ENCODE measurements at regions of chr17 and their contacts with region 1.

Region 1: DNA sequence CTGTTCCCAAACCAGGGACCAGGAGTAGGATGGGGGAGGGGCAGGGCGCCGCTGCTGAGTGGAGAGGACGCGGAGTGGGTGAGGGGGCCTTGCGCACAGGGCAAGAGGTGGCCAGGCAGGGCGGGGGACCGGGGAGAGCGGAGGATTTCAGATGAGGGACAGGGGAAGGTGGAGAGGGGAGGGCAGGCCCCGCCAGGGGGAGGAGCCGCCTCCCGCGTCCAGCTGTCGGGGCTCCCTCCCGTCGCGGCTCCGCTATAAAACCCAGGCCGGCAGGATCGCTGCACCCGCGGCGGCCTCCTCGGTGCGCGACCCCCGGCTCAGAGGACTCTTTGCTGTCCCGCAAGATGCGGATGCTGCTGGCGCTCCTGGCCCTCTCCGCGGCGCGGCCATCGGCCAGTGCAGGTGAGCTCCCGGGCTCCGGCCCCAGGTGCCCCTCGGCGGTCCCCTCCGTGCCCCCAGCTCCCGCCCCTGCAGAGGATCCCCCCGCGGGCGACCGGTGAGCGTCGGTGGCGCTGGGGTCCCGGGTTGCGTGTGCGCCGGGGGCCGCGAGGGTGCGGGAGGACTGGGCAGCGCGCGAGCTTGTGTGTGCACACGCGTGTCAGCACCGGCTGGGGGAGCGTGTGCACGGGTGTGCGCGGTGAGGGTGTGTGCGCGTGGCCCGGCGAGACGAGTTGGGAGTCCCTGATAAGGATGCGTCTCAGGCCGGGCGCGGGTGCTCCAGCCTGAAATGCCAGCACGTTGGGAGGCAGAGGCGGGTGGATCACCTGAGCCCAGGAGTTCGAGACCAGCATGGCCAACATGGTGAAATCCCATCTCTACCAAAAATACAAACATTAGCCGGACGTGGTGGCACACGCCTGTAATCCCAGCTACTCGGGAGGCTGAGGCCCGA is at the start of gene CA4:
- DNase-seq: no peak
- ATAC-seq: no peak
- H3K4me3 Mint-ChIP-seq: peak within 1 kb of the TSS; percentile 65
- H3K27ac Mint-ChIP-seq: no peak within 1 kb of the TSS
- H3K4me1 Mint-ChIP-seq: peaks cover 11% of the 10 kb centered on the region
- H3K27me3 Mint-ChIP-seq: peaks cover 70% of the 10 kb centered on the region
- total RNA-seq, gene CA4: not detected

Region 2: GRCh38 chr17:60372790-60373483 is 223.0 kb after region 1 on chr17:
- POLR2A ChIA-PET with region 1: interaction called, 10 read pairs
- DNase-seq: no peak
- ATAC-seq: no peak
- H3K4me3 Mint-ChIP-seq: no peak overlapping the region
- H3K27ac Mint-ChIP-seq: no peak overlapping the region
- H3K4me1 Mint-ChIP-seq: peaks cover 9% of the 10 kb centered on the region
- H3K27me3 Mint-ChIP-seq: no peaks in the 10 kb centered on the region

Measured in activated naive CD8-positive, alpha-beta T cell treated with anti-CD3 and anti-CD28 coated beads, Interleukin-2, amount 10 ng/mL, durations not matched to agents 7 days and 5 days (primary cell).